Caco-2 (cell line): ENCODE measurements at regions of chr7 and their contacts with region 1.

Region 1: DNA sequence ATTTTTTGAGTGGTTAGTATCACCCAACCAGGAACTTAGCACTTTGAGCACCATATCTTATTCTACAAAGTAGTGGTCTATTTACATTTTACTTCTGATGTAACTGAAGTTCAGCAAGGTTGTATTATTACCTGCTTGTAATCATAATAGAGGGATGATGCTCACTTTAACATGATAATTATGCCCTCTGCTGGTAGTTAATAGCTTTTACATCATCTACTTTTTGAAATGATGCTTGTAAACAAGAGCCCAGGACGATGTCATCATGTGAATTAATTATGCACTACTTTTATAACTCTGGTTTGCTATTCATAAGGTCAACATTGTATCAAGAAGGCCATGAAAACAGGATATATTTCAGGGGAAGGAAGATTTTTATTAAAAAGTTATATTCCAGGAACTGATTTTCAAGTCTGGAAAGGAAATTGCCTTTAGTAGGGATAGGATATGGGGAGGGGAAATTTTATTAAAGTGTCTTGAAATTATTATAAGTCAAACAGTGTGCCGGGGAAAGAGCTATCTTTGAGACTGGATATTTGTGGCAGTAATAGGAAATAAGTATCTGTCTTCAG is 80.3 kb upstream of the SCIN start:
- DNase-seq: no peak
- H3K4me3 ChIP-seq: no peak overlapping the region
- H3K4me3 Mint-ChIP-seq: no peak overlapping the region
- H3K27ac Mint-ChIP-seq: no peak overlapping the region
- H3K4me1 ChIP-seq: no peaks in the 10 kb centered on the region
- H3K4me1 Mint-ChIP-seq: no peaks in the 10 kb centered on the region
- H3K27me3 ChIP-seq: no peaks in the 10 kb centered on the region
- H3K27me3 Mint-ChIP-seq: peaks cover 5% of the 10 kb centered on the region
- CTCF ChIP-seq: peak; percentile 37 to 59

Region 2: GRCh38 chr7:11427686-11428273 is 1062.4 kb before region 1 on chr7:
- CTCF ChIA-PET with region 1: no interaction called
- POLR2A ChIA-PET with region 1: no interaction called
- intact Hi-C with region 1: loop called (anchors 5 kb)
- DNase-seq: peak in 1 of 2 experiments; percentile 24
- H3K4me3 ChIP-seq: no peak overlapping the region
- H3K4me3 Mint-ChIP-seq: no peak overlapping the region
- H3K27ac Mint-ChIP-seq: no peak overlapping the region
- H3K4me1 ChIP-seq: no peaks in the 10 kb centered on the region
- H3K4me1 Mint-ChIP-seq: no peaks in the 10 kb centered on the region
- H3K27me3 ChIP-seq: no peaks in the 10 kb centered on the region
- H3K27me3 Mint-ChIP-seq: no peaks in the 10 kb centered on the region
- CTCF ChIP-seq: peak; percentile 72 to 78

Region 3: GRCh38 chr7:11831736-11832495 is 658.3 kb before region 1 on chr7 and contains the start of gene THSD7A:
- CTCF ChIA-PET with region 1: no interaction called
- POLR2A ChIA-PET with region 1: no interaction called
- intact Hi-C with region 1: loop called (anchors 1 kb)
- DNase-seq: peak; percentile 31 to 67
- H3K4me3 ChIP-seq: peak within 1 kb of the TSS; percentile 33
- H3K4me3 Mint-ChIP-seq: peak within 1 kb of the TSS; percentile 71
- H3K27ac Mint-ChIP-seq: no peak within 1 kb of the TSS
- H3K4me1 ChIP-seq: peaks cover 7% of the 10 kb centered on the region
- H3K4me1 Mint-ChIP-seq: no peaks in the 10 kb centered on the region
- H3K27me3 ChIP-seq: no peaks in the 10 kb centered on the region; the same call in 1 of the 2 replicates
- H3K27me3 Mint-ChIP-seq: peaks cover 21% of the 10 kb centered on the region
- CTCF ChIP-seq: peak in 1 of 2 experiments; percentile 24
- total RNA-seq, gene THSD7A: 0.05 TPM in 2 replicates

Region 4: GRCh38 chr7:12389089-12389700 is 101.0 kb before region 1 on chr7:
- CTCF ChIA-PET with region 1: no interaction called
- POLR2A ChIA-PET with region 1: no interaction called
- intact Hi-C with region 1: loop called (anchors 1 kb)
- DNase-seq: peak; percentile 60 to 65
- H3K4me3 ChIP-seq: no peak overlapping the region
- H3K4me3 Mint-ChIP-seq: no peak overlapping the region
- H3K27ac Mint-ChIP-seq: no peak overlapping the region
- H3K4me1 ChIP-seq: no peaks in the 10 kb centered on the region
- H3K4me1 Mint-ChIP-seq: no peaks in the 10 kb centered on the region
- H3K27me3 ChIP-seq: no peaks in the 10 kb centered on the region
- H3K27me3 Mint-ChIP-seq: no peaks in the 10 kb centered on the region
- CTCF ChIP-seq: peak; percentile 74 to 91

Region 5: GRCh38 chr7:12436896-12437535 is 53.2 kb before region 1 on chr7:
- CTCF ChIA-PET with region 1: interaction called, 5 read pairs
- POLR2A ChIA-PET with region 1: no interaction called
- intact Hi-C with region 1: loop called (anchors 1 kb)
- DNase-seq: peak in 1 of 2 experiments; percentile 12
- H3K4me3 ChIP-seq: no peak overlapping the region
- H3K4me3 Mint-ChIP-seq: no peak overlapping the region
- H3K27ac Mint-ChIP-seq: no peak overlapping the region
- H3K4me1 ChIP-seq: no peaks in the 10 kb centered on the region
- H3K4me1 Mint-ChIP-seq: no peaks in the 10 kb centered on the region
- H3K27me3 ChIP-seq: no peaks in the 10 kb centered on the region
- H3K27me3 Mint-ChIP-seq: peaks cover 8% of the 10 kb centered on the region
- CTCF ChIP-seq: peak; percentile 12 to 24

Region 6: GRCh38 chr7:12458520-12459131 is 31.6 kb before region 1 on chr7:
- CTCF ChIA-PET with region 1: interaction called, 51 read pairs
- POLR2A ChIA-PET with region 1: no interaction called
- intact Hi-C with region 1: loop called (anchors 1 kb)
- DNase-seq: peak in 1 of 2 experiments; percentile 55
- H3K4me3 ChIP-seq: no peak overlapping the region
- H3K4me3 Mint-ChIP-seq: no peak overlapping the region
- H3K27ac Mint-ChIP-seq: no peak overlapping the region
- H3K4me1 ChIP-seq: no peaks in the 10 kb centered on the region
- H3K4me1 Mint-ChIP-seq: no peaks in the 10 kb centered on the region
- H3K27me3 ChIP-seq: no peaks in the 10 kb centered on the region
- H3K27me3 Mint-ChIP-seq: no peaks in the 10 kb centered on the region
- CTCF ChIP-seq: peak; percentile 69 to 79